ENCODE measurements at regions of chr19 and their contacts with region 1.

Region 1: DNA sequence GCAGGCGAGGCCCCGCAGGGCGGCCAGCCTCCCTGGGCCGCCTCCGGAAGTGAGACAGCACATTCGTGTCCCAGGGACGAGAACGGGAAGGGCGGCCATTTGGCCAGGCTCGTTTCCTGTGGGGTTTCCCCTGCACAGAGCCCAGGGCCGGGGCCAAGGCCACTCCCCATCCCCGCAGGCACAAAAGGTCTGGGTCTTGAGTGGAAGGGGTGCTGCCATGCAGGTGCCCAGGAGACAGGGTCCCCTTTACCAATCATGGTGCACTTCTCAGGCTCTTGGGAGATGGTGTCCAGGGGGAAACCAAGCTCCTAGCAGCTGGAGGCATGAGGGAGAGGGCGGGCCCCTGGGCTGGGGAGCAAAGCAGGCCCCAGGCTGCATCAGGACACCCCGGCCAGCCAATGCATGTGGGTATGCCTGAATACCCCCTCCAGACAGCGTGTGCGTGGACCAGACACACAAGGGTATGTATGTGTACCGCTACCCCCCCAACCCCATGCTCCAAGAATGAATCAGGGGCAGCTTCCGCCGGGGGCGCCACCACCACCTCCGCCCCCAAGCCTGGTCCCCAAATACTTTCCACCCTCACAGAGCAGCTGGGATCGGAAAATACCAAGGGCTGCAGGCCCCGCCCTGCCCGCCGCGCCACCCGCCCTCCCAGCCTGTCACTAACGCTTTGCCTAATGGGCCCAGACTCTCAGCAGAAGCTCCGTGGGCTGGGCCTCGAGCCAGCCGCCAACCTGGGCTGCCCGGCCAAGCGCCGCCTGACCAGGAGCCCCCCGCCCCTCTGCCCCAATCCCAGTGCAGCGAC is 37.6 kb upstream of the NANOS3 start:
- DNase-seq: peak; percentile 79
- H3K4me3 Mint-ChIP-seq: peak overlapping the region; percentile 93
- H3K27ac Mint-ChIP-seq: peak overlapping the region; percentile 99
- H3K4me1 Mint-ChIP-seq: peaks cover 36% of the 10 kb centered on the region
- H3K27me3 Mint-ChIP-seq: no peaks in the 10 kb centered on the region

Region 2: GRCh38 chr19:13774217-13775191 is 64.8 kb before region 1 on chr19 and contains the start of gene C19orf53:
- intact Hi-C with region 1: loop called (anchors 1 kb)
- DNase-seq: peak; percentile 87
- H3K4me3 Mint-ChIP-seq: peak within 1 kb of the TSS; percentile 100
- H3K27ac Mint-ChIP-seq: peak within 1 kb of the TSS; percentile 99
- H3K4me1 Mint-ChIP-seq: peaks cover 25% of the 10 kb centered on the region
- H3K27me3 Mint-ChIP-seq: no peaks in the 10 kb centered on the region
- total RNA-seq, gene C19orf53: 158 and 162 TPM in 2 replicates

Region 3: GRCh38 chr19:13784731-13785452 is 54.4 kb before region 1 on chr19:
- intact Hi-C with region 1: loop called (anchors 2 kb)
- DNase-seq: peak; percentile 45
- H3K4me3 Mint-ChIP-seq: peak overlapping the region; percentile 15
- H3K27ac Mint-ChIP-seq: peak overlapping the region; percentile 55
- H3K4me1 Mint-ChIP-seq: peaks cover 31% of the 10 kb centered on the region
- H3K27me3 Mint-ChIP-seq: no peaks in the 10 kb centered on the region

Region 4: GRCh38 chr19:13899393-13899792 is 60.1 kb after region 1 on chr19:
- intact Hi-C with region 1: no loop called
- DNase-seq: no peak
- H3K4me3 Mint-ChIP-seq: no peak overlapping the region
- H3K27ac Mint-ChIP-seq: no peak overlapping the region
- H3K4me1 Mint-ChIP-seq: no peaks in the 10 kb centered on the region
- H3K27me3 Mint-ChIP-seq: peaks cover 2% of the 10 kb centered on the region

Region 5: DNA sequence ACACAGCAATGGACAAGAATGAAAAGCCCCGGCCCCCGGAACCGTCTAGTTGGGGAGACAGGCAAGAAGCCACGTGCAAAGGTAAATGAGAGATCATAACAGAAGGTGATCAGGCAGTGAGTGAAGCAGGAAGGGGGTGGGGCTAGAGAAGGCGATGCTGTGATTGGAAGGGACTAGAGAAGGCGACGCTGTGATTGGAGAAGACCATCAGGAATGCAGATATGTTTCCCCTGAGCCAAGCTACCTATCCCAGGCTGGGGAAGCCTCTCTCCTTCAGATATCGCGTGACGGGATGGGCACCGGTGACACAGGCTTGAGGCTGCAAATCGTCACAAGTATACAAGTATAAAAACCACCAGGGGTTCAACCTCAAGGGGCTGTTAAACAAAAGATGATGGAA is 134.7 kb after region 1 on chr19:
- intact Hi-C with region 1: no loop called
- DNase-seq: no peak
- H3K4me3 Mint-ChIP-seq: no peak overlapping the region
- H3K27ac Mint-ChIP-seq: no peak overlapping the region
- H3K4me1 Mint-ChIP-seq: no peaks in the 10 kb centered on the region
- H3K27me3 Mint-ChIP-seq: no peaks in the 10 kb centered on the region

Measured in activated T-helper 1 cell treated with anti-CD3 and anti-CD28 coated beads, Interleukin-12 subunit alpha, Interleukin-12 subunit beta, Interleukin-2, Interleukin-4 antibody, amounts not matched to agents 30 ng/mL and 10 ng/mL and 1 ng/mL, durations not matched to agents 14 hours and 24 hours and 36 hours (primary cell).